Activated CD8-positive, alpha-beta memory T cell treated with anti-CD3 and anti-CD28 coated beads, Interleukin-2, amount 10 ng/mL, durations not matched to agents 7 days and 5 days (primary cell): ENCODE measurements at regions of chr6 and their contacts with region 1.

Region 1: GRCh38 chr6:116217069-116217468 is 36.8 kb downstream of the TSPYL4 start:
- DNase-seq: no peak
- ATAC-seq: peak; percentile 63
- H3K4me3 Mint-ChIP-seq: no peak overlapping the region
- H3K27ac Mint-ChIP-seq: no peak overlapping the region
- H3K4me1 Mint-ChIP-seq: no peaks in the 10 kb centered on the region
- H3K27me3 Mint-ChIP-seq: no peaks in the 10 kb centered on the region

Region 2: GRCh38 chr6:116087437-116088027 is 129.5 kb before region 1 on chr6:
- CTCF ChIA-PET with region 1: no interaction called
- DNase-seq: no peak
- ATAC-seq: no peak
- H3K4me3 Mint-ChIP-seq: no peak overlapping the region
- H3K27ac Mint-ChIP-seq: no peak overlapping the region
- H3K4me1 Mint-ChIP-seq: peaks cover 23% of the 10 kb centered on the region
- H3K27me3 Mint-ChIP-seq: peaks cover 16% of the 10 kb centered on the region

Region 3: GRCh38 chr6:116229287-116229913 is 12.3 kb after region 1 on chr6:
- CTCF ChIA-PET with region 1: interaction called, 15 read pairs
- DNase-seq: no peak
- ATAC-seq: no peak
- H3K4me3 Mint-ChIP-seq: no peak overlapping the region
- H3K27ac Mint-ChIP-seq: no peak overlapping the region
- H3K4me1 Mint-ChIP-seq: no peaks in the 10 kb centered on the region
- H3K27me3 Mint-ChIP-seq: no peaks in the 10 kb centered on the region